Activated naive CD4-positive, alpha-beta T cell treated with anti-CD3 and anti-CD28 coated beads for 36 hours (primary cell): ENCODE measurements at regions of chr12 and their contacts with region 1.

Region 1: GRCh38 chr12:59595883-59596540 is at the start of gene SLC16A7:
- DNase-seq: peak; percentile 84
- H3K4me3 Mint-ChIP-seq: peak within 1 kb of the TSS; percentile 89
- H3K27ac Mint-ChIP-seq: peak within 1 kb of the TSS; percentile 98
- H3K4me1 Mint-ChIP-seq: peaks cover 49% of the 10 kb centered on the region
- H3K27me3 Mint-ChIP-seq: no peaks in the 10 kb centered on the region
- total RNA-seq, gene SLC16A7: 27.5 to 27.8 TPM

Region 2: GRCh38 chr12:57751788-57752667 is 1844.0 kb before region 1 on chr12 and contains the start of gene CDK4:
- CTCF ChIA-PET with region 1: no interaction called
- intact Hi-C with region 1: loop called (anchors 2 kb)
- DNase-seq: peak; percentile 99
- H3K4me3 Mint-ChIP-seq: peak within 1 kb of the TSS; percentile 100
- H3K27ac Mint-ChIP-seq: peak within 1 kb of the TSS; percentile 99
- H3K4me1 Mint-ChIP-seq: peaks cover 51% of the 10 kb centered on the region
- H3K27me3 Mint-ChIP-seq: no peaks in the 10 kb centered on the region
- total RNA-seq, gene CDK4: 194 to 202 TPM

Region 3: GRCh38 chr12:57941165-57941894 is 1654.7 kb before region 1 on chr12 and contains the start of gene ATP23:
- CTCF ChIA-PET with region 1: no interaction called
- intact Hi-C with region 1: loop called (anchors 2 kb)
- DNase-seq: peak; percentile 90
- H3K4me3 Mint-ChIP-seq: peak within 1 kb of the TSS; percentile 94
- H3K27ac Mint-ChIP-seq: peak within 1 kb of the TSS; percentile 96
- H3K4me1 Mint-ChIP-seq: peaks cover 38% of the 10 kb centered on the region
- H3K27me3 Mint-ChIP-seq: no peaks in the 10 kb centered on the region
- total RNA-seq, gene ATP23: 11.3 to 11.9 TPM

Region 4: GRCh38 chr12:59580050-59580449 is 16.0 kb before region 1 on chr12:
- CTCF ChIA-PET with region 1: interaction called, 3 read pairs
- intact Hi-C with region 1: loop called (anchors 1 kb)
- DNase-seq: no peak
- H3K4me3 Mint-ChIP-seq: no peak overlapping the region
- H3K27ac Mint-ChIP-seq: no peak overlapping the region
- H3K4me1 Mint-ChIP-seq: peaks cover 34% of the 10 kb centered on the region
- H3K27me3 Mint-ChIP-seq: no peaks in the 10 kb centered on the region

Region 5: DNA sequence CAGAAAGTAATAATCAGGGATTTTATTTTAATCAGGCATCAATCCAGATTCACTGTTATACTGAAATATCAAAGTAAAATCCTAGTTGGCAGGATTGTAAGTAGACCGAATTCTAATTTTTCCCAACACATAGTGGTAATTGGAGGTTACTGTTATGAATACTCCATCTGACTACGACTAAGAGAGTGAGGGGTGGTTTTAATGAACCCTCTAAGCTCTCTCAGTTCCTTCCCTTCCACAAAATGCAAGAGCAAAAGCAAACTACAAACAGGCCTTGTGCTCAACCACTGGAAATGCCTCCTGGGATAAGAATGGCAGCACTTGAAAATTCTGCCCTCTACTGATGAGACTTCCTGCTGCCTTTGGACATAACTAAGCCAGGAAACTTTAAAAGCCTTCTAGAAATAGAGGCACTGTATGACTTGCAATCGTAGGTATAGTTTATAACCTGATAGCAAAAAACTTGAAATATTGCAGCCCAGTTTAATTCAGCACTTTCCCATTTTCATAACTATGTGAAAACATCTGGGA is 184.7 kb after region 1 on chr12:
- CTCF ChIA-PET with region 1: no interaction called
- intact Hi-C with region 1: loop called (anchors 2 kb)
- DNase-seq: no peak
- H3K4me3 Mint-ChIP-seq: no peak overlapping the region
- H3K27ac Mint-ChIP-seq: no peak overlapping the region
- H3K4me1 Mint-ChIP-seq: no peaks in the 10 kb centered on the region
- H3K27me3 Mint-ChIP-seq: no peaks in the 10 kb centered on the region